HCT116 (cell line): ENCODE measurements at regions of chr11 and their contacts with region 1.

Region 1: GRCh38 chr11:46800177-46800576 is 45.9 kb downstream of the CKAP5 start:
- DNase-seq: no peak
- ATAC-seq: no peak
- H3K4me3 ChIP-seq: no peak overlapping the region
- H3K27ac ChIP-seq: no peak overlapping the region
- H3K4me1 ChIP-seq: no peaks in the 10 kb centered on the region
- H3K27me3 ChIP-seq: no peaks in the 10 kb centered on the region
- CTCF ChIP-seq: no peak
- POLR2A ChIP-seq: no peak
- RAD21 ChIP-seq: no peak

Region 2: DNA sequence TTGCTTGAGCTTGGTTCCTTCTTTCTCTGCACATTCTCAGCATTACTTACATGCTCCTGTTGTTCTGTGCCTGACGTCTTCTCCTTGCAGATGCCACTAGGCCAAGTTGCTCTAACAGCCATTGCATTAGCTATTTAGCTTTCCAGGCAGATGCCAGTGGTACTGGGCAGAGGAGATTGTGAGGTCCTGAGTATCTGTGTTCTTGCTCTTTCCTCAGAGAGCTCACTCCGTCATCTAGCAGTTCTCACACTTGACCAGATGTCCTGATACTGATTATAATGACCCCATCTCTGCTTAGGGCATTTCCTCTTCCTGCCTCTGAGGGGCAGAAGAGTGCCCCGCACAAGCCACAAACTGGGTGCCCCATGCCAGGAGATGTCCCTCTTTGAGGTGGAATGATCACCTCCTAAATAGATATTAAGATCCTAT is 130.5 kb before region 1 on chr11:
- CTCF ChIA-PET with region 1: no interaction called
- POLR2A ChIA-PET with region 1: no interaction called
- RAD21 ChIA-PET with region 1: no interaction called
- intact Hi-C with region 1: loop called (anchors 5 kb)
- DNase-seq: no peak
- ATAC-seq: peak; percentile 89
- H3K4me3 ChIP-seq: no peak overlapping the region
- H3K27ac ChIP-seq: no peak overlapping the region
- H3K4me1 ChIP-seq: no peaks in the 10 kb centered on the region
- H3K27me3 ChIP-seq: no peaks in the 10 kb centered on the region
- CTCF ChIP-seq: peak; percentile 31 to 61 (median 58); a peak in 4 of 6 replicates
- POLR2A ChIP-seq: no peak
- RAD21 ChIP-seq: peak; percentile 53; the same call in 1 of the 2 replicates

Region 3: DNA sequence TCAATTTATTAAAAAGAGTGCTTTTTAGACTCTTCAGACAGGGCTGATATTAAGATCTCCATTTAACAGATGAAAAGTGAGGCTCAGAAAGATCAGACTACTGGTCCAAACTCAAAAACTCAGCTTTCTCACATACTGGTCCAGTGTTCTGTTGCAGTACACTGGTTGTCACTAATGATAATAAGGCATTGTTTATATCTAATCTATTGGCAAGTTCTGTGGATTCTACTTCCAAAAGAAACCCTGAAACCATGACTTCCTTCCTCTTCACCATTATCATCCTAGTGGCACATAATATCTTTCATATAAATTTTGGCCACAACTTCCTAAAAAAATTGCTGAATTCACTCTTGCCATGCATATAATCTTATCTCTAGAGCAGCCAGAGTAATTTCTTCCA is 44.2 kb before region 1 on chr11:
- CTCF ChIA-PET with region 1: no interaction called
- POLR2A ChIA-PET with region 1: no interaction called
- RAD21 ChIA-PET with region 1: no interaction called
- intact Hi-C with region 1: loop called (anchors 2 kb)
- DNase-seq: no peak
- ATAC-seq: no peak
- H3K4me3 ChIP-seq: no peak overlapping the region
- H3K27ac ChIP-seq: no peak overlapping the region
- H3K4me1 ChIP-seq: peaks cover 0 to 21% of the 10 kb centered on the region in 2 experiments; a peak in 3 of 4 replicates
- H3K27me3 ChIP-seq: no peaks in the 10 kb centered on the region
- CTCF ChIP-seq: no peak
- POLR2A ChIP-seq: no peak
- RAD21 ChIP-seq: no peak